Right ventricle myocardium superior (tissue), 1 donor: ENCODE measurements at regions of chr12 and their contacts with region 1.

Region 1: GRCh38 chr12:47307680-47308399 is 228.1 kb upstream of the AMIGO2 start:
- DNase-seq: no peak
- ATAC-seq: peak; percentile 82

Region 2: GRCh38 chr12:47079468-47079980 is 228.3 kb before region 1 on chr12 and contains the starts of genes AMIGO2 and PCED1B:
- intact Hi-C with region 1: loop called (anchors 10 kb)
- DNase-seq: peak; percentile 88
- ATAC-seq: peak; percentile 80
- total RNA-seq, gene AMIGO2: 2.0 TPM
- total RNA-seq, gene PCED1B: 0.67 TPM

Region 3: GRCh38 chr12:47247433-47247832 is 60.4 kb before region 1 on chr12:
- intact Hi-C with region 1: no loop called
- DNase-seq: no peak
- ATAC-seq: no peak